ENCODE measurements at regions of chr9 and their contacts with region 1.

Region 1: DNA sequence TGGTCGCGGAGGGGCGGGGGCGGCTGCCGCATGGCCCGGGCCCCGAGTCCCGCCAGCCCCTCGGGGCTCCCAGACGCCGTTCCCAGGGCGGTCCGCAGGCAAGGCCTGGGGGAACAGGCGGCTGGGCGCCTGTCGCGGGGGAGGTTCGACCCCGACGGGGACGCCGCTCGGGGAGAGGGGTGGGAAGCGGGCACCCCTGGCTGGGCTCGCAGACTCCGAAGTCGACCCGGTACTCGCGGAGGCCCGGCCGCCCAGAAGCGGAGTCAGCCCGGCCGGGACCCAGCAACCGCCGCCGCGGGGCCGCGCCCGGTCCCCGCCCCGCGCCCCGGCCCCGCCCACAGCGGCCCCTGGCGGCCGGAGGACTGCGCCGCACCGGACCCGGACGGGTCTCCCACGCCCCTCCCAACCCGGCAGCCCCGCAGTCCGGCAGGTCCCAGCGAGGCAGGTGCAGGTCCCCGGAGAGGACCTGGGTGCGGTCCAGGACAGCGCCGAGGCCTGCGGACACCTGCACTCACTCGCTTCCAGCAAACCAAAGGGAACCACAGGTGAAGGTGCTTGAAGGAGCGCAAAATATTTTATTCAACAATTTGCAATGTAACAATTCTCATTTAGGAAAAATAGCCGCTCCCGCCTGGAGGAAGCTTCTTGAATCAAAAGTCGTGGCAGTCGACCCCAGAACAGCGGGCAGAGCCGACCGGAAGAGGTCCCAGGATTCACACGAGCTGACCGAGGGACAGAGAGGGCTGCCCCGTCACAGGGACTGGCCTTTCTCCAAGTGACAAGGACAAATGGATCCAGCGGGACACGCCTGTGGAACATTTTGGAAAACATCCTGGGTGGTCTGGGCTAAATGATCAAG is at the start of gene INPP5E:
- DNase-seq: peak in 1 of 2 donors; percentile 80
- H3K4me3 ChIP-seq: peak within 1 kb of the TSS; percentile 83 to 86
- H3K27ac ChIP-seq: peak within 1 kb of the TSS; percentile 6 to 47
- H3K4me1 ChIP-seq: peaks cover 14 to 15% of the 10 kb centered on the region in 2 donors
- H3K27me3 ChIP-seq: no peaks in the 10 kb centered on the region
- CTCF ChIP-seq: peak; percentile 49 to 84 (median 51)
- total RNA-seq, gene INPP5E: 20.2 TPM

Region 2: DNA sequence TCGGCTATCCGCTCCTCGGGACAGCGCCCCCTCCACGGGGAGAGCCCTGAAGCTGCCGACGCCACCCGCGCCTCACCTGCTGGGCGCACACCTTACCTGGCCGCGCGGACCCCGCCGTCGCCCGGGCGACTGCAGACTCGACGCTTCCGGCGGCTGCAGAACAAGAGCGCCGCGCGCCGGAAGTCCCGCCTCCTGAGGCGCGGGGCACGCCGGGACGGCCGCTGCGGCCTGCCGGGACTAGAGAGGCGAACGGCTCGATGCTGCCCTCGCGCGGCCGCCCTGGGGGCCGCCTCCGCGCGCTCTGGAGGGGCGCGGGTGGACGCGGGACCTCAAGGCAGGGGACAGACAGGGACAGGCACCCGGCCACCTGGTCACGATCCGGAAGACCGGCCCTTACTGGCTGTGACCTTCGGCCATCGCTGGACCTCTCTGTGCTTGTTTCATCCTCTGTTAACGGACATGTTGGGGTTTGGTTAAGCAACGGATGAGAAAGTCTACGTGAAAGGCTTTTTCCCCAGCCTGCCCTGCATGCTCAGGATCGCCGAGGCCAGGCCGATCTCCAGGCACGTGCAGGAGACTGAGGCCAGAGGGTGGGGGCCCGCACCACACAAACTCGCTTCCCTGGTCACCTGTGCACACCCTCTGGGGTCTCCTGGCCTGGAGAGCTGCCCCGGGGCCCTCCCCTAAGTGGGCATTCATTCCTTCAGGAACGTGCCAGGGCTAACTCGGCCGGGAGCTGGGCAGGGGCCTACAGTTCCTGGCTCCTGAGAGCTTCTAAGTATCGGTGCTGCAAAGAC is 39.5 kb before region 1 on chr9 and contains the start of gene SNAPC4:
- intact Hi-C with region 1: loop called (anchors 1 kb)
- DNase-seq: peak; percentile 36 to 91
- H3K4me3 ChIP-seq: peak within 1 kb of the TSS; percentile 90 to 97
- H3K27ac ChIP-seq: peak within 1 kb of the TSS; percentile 6 to 50
- H3K4me1 ChIP-seq: peaks cover 10 to 13% of the 10 kb centered on the region in 2 donors
- H3K27me3 ChIP-seq: no peaks in the 10 kb centered on the region
- CTCF ChIP-seq: peak; percentile 85 to 93 (median 92)
- total RNA-seq, gene SNAPC4: 9.4 TPM

Region 3: GRCh38 chr9:136410500-136411287 is 29.1 kb before region 1 on chr9 and contains the starts of genes ENTR1 and PMPCA:
- intact Hi-C with region 1: loop called (anchors 2 kb)
- DNase-seq: peak; percentile 67 to 96
- H3K4me3 ChIP-seq: peak within 1 kb of the TSS; percentile 72 to 92
- H3K27ac ChIP-seq: peak within 1 kb of the TSS; percentile 77 to 80
- H3K4me1 ChIP-seq: peaks cover 9 to 19% of the 10 kb centered on the region in 2 donors
- H3K27me3 ChIP-seq: no peaks in the 10 kb centered on the region
- CTCF ChIP-seq: no peak
- total RNA-seq, gene ENTR1: 27.7 TPM
- total RNA-seq, gene PMPCA: 69.1 TPM

Region 4: DNA sequence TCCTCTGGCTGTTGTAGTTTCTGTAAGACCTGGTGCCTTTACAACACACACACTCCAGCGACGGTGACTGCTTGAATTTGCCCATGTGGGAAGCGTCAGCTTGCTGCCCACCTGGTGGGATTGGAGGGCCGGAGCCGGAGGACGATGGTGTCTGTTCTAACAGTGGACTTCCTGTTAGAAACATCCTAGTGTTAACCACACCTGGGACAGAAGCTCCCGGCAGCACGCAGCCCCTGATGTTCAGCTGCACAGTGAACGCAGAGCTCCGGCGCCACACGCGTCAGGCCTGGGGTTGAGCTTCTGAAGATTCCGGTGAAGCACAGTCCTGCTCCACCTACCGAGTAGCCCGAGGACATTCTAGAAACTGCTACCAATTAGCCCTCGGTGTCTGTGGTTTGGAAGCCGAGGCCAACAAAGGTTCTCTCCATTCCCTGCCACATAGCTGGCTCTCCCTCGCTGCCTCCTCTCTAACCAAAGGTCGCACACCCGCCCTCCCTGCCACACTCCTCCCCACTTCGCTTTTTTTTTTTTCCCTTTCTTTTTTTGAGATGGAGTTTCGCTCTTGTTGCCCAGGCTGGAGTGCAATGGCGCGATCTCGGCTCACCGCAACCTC is 14.9 kb before region 1 on chr9:
- intact Hi-C with region 1: loop called (anchors 2 kb)
- DNase-seq: no peak
- H3K4me3 ChIP-seq: no peak overlapping the region
- H3K27ac ChIP-seq: no peak overlapping the region
- H3K4me1 ChIP-seq: no peaks in the 10 kb centered on the region
- H3K27me3 ChIP-seq: no peaks in the 10 kb centered on the region
- CTCF ChIP-seq: no peak